GM10248 (cell line): ENCODE measurements at regions of chr1 and their contacts with region 1.

Region 1: DNA sequence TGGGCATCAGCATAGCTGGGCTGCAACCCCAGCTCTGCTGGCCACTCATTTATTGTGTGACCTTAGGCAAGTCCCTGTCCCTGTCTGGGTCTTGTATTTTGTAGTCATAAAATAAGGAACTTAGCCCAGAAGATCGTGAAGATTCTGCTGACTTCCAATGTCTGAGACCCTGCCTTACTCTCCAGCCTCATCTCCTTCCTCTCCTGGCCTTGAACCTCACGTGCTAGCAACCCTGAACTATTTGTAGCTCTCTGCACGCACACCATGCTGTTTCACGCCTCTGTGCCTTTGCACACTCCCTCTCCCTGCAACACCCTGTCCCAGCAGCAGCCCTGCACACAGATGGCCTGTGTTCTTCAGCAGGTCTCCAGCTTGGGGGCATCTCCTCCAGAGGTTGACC is 121.1 kb downstream of the LACTBL1 start:
- DNase-seq: no peak
- CTCF ChIP-seq: no peak

Region 2: DNA sequence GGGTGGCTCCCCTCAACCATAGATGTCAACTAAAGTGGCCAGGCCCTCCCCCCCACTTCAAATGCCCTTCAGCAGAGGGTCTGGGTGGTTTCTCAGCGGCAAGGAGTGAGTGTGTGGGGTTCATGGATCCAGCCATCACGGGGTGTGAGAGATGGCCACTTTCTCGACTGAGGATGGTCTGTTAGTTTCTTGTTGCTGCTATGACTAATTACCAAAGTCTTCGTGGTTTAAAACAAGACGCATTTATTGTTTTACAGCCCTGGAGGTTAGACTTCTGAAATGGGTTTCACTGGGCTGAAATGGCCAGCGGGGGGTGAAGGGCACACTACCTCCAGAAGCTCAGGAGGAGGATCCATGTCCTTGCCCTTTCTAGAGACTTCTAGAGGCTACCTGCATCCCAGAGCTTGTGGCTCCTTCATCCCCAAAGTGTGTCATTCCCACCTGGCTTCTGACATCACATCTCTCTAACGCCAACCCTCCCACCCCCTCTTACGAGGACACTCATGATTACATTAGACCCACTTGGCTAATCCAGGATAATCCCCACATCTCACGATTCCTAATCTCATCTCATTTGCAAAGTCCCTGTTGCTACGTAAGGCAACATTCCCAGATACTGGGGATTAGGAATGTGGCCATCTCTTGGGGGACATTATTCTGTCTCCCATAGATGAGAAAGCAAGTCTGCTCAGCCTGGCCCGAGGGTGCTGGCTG is 87.9 kb before region 1 on chr1:
- CTCF ChIA-PET with region 1: no interaction called
- POLR2A ChIA-PET with region 1: no interaction called
- DNase-seq: peak; percentile 62
- CTCF ChIP-seq: no peak

Region 3: DNA sequence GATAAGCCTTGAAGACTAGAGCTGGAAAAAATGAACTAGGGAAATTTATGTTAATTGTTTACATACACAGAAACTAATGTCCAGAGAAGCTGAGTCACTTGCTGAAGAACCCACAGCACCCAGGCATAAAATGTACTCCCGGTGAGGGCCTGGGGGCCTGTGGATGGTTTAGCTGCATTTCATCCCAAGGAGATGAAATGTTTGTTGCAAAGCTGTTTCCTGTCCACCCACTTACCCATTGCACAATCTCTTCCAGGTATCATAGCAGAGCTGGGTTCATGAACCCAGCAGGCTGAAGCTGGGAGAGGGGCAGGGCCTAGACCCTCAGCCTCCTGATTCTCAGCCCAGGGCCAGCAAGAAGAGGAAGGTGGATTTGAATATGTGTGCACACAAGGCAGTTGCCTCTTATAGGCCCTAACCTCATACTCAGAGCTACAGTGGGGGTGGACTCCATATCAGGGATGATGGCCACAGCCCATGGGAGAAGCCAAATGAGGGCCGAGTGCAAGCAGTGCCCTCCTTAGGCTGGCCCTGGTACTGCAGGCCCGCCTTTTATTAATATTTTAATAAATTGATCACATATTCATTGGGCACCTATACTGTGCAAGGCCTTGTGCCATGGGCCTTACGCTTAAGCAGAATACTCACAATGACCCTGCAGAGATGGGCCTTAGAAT is 10.4 kb after region 1 on chr1:
- CTCF ChIA-PET with region 1: interaction called, 13 read pairs
- POLR2A ChIA-PET with region 1: no interaction called
- DNase-seq: peak; percentile 39
- CTCF ChIP-seq: peak; percentile 24